H1 (cell line): ENCODE measurements at regions of chr17 and their contacts with region 1.

Region 1: GRCh38 chr17:50139950-50140871 is 10.3 kb upstream of the SAMD14 start:
- DNase-seq: peak; percentile 72 to 96
- H3K4me3 ChIP-seq: no peak overlapping the region
- H3K27ac ChIP-seq: no peak overlapping the region; the same call in 1 of the 2 replicates
- H3K4me1 ChIP-seq: peaks cover 0 to 7% (median 0%) of the 10 kb centered on the region in 4 experiments; a peak in 1 of 7 replicates
- H3K27me3 ChIP-seq: no peaks in the 10 kb centered on the region
- CTCF ChIP-seq: peak; percentile 87 to 98 (median 95)
- EP300 ChIP-seq: peak in 1 of 2 experiments; percentile 18; a peak in 1 of 3 replicates
- POLR2A ChIP-seq: no peak
- RAD21 ChIP-seq: peak; percentile 68 to 71

Region 2: GRCh38 chr17:50114849-50115357 is 25.3 kb before region 1 on chr17:
- CTCF ChIA-PET with region 1: interaction called, 114 read pairs
- POLR2A ChIA-PET with region 1: interaction called, 4 read pairs
- DNase-seq: peak in 1 of 2 experiments; percentile 66
- H3K4me3 ChIP-seq: no peak overlapping the region
- H3K27ac ChIP-seq: no peak overlapping the region
- H3K4me1 ChIP-seq: peaks cover 6 to 14% (median 11%) of the 10 kb centered on the region in 4 experiments
- H3K27me3 ChIP-seq: peaks cover 0 to 18% (median 12%) of the 10 kb centered on the region in 4 experiments; a peak in 5 of 7 replicates
- CTCF ChIP-seq: peak in 2 of 3 experiments; percentile 89 to 93; a peak in 3 of 4 replicates
- EP300 ChIP-seq: no peak
- POLR2A ChIP-seq: no peak
- RAD21 ChIP-seq: peak; percentile 68 to 73

Region 3: DNA sequence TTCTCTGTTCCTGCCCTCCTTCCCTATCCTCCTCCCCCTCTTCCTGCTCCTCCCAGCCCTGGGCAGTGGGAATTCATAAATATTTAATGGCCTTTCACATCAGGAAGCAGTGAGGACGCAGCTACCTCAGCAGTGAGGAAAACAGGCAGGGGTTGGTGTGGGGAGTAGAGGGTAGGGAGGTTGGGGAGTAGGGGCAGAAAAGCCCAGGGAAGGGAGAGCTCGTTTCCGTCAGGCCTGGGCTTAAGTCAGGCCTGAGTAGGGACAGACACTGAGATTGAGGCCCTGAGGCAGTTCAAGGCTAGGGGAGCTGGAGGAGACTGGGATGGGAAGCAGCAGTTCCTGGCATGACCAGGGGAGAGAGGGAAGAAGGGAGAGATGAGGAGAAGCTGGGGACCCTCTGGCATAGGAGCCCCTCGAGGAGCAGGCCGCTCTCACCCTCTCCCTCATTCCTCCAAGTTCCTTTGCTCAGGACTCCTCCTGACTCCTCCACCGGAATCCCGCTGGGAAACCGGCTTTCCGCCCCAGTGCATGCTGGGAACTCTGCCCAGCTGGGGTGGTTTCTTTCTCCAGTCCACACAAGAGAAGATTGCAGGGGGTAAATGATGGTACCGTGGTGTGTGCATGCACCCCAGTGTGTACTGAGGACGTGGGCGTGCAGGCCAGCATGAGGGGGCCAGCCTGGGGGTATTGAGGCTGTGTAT is 16.4 kb before region 1 on chr17:
- CTCF ChIA-PET with region 1: interaction called, 299 read pairs
- POLR2A ChIA-PET with region 1: interaction called, 5 read pairs
- DNase-seq: no peak
- H3K4me3 ChIP-seq: 0 out of 8 replicates have a peak overlapping the region, but pooled peaks of 1 of the 4 experiments have one; percentile 3
- H3K27ac ChIP-seq: peak overlapping the region; percentile 37
- H3K4me1 ChIP-seq: peaks cover 5 to 24% (median 19%) of the 10 kb centered on the region in 4 experiments
- H3K27me3 ChIP-seq: peaks cover 0 to 11% (median 3%) of the 10 kb centered on the region in 4 experiments; a peak in 5 of 7 replicates
- CTCF ChIP-seq: no peak
- EP300 ChIP-seq: no peak
- POLR2A ChIP-seq: no peak
- RAD21 ChIP-seq: no peak

Region 4: DNA sequence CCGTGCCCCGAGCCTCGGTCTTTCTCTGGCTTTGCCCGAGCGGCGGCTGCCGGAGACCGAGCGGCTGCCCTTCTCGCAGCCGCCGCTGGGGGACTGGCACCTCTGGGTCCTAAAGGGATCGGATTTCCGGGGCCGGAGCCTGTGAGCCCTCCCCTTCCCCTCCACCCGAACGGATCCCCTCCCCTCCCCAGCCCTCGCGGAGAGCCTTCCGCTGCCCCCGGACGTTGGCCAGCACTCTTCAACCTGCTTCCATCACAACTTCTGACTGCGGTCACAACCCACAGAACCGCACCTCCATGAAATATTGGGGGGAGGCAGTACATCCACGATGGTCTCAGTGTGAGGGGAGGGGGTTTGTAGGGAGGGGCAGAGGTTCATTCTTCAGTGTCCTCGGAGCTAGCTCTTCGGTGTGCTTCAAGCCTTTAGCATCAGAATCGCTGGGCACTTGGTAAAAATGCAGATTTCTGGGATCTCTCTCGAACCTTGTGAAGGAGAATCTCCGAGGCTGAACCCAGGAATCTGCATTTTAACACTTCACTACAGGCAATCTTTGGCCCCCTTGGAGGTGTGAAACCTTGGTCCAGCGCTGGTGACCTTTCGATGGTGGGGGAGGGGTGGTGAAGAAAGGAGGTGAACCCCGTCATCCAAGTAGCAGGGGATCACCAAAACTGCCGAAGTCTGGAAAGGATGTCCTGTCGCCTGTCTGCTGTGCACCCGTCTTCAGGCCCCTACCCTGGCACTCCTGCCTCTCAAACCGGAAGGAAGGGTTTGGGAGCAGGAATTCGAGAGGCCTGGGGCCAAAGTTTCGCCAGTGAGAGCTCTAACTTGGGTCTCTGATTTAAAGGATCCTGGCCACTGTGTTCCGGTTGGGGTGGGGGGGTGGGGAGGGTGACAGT is 11.1 kb after region 1 on chr17:
- CTCF ChIA-PET with region 1: interaction called, 299 read pairs
- POLR2A ChIA-PET with region 1: interaction called, 4 read pairs
- DNase-seq: peak; percentile 71 to 90
- H3K4me3 ChIP-seq: peak overlapping the region; percentile 57 to 65 (median 62)
- H3K27ac ChIP-seq: no peak overlapping the region
- H3K4me1 ChIP-seq: peaks cover 0 to 29% (median 17%) of the 10 kb centered on the region in 4 experiments; a peak in 6 of 7 replicates
- H3K27me3 ChIP-seq: peaks cover 2 to 17% (median 15%) of the 10 kb centered on the region in 4 experiments; a peak in 6 of 7 replicates
- CTCF ChIP-seq: peak; percentile 29 to 53 (median 32); a peak in 3 of 4 replicates
- EP300 ChIP-seq: 0 out of 3 replicates have a peak, but pooled peaks of 1 of the 2 experiments have one; percentile 17
- POLR2A ChIP-seq: no peak
- RAD21 ChIP-seq: peak in 1 of 2 experiments; percentile 6; a peak in 2 of 4 replicates

Region 5: GRCh38 chr17:50177983-50178834 is 38.0 kb after region 1 on chr17:
- CTCF ChIA-PET with region 1: interaction called, 10 read pairs
- POLR2A ChIA-PET with region 1: no interaction called
- DNase-seq: peak; percentile 39 to 80
- H3K4me3 ChIP-seq: peak overlapping the region in 3 of 4 experiments; percentile 17 to 42 (median 24); a peak in 3 of 8 replicates
- H3K27ac ChIP-seq: no peak overlapping the region
- H3K4me1 ChIP-seq: peaks cover 4 to 22% (median 15%) of the 10 kb centered on the region in 4 experiments
- H3K27me3 ChIP-seq: no peaks in the 10 kb centered on the region
- CTCF ChIP-seq: peak; percentile 50 to 60 (median 57)
- EP300 ChIP-seq: no peak
- POLR2A ChIP-seq: peak in 1 of 2 experiments; percentile 45; a peak in 1 of 3 replicates
- RAD21 ChIP-seq: peak in 1 of 2 experiments; percentile 24; a peak in 1 of 4 replicates

Region 6: GRCh38 chr17:50297407-50297865 is 157.2 kb after region 1 on chr17:
- CTCF ChIA-PET with region 1: interaction called, 27 read pairs
- POLR2A ChIA-PET with region 1: no interaction called
- DNase-seq: peak; percentile 50 to 93
- H3K4me3 ChIP-seq: no peak overlapping the region
- H3K27ac ChIP-seq: no peak overlapping the region
- H3K4me1 ChIP-seq: peaks cover 0 to 4% (median under 1%) of the 10 kb centered on the region in 4 experiments; a peak in 2 of 7 replicates
- H3K27me3 ChIP-seq: no peaks in the 10 kb centered on the region
- CTCF ChIP-seq: peak; percentile 93 to 96 (median 94)
- EP300 ChIP-seq: no peak
- POLR2A ChIP-seq: no peak
- RAD21 ChIP-seq: peak; percentile 99 to 100